ENCODE measurements at regions of chr5 and their contacts with region 1.

Region 1: GRCh38 chr5:129616517-129616916 is 131.4 kb upstream of the MINAR2 start:
- DNase-seq: no peak
- H3K4me3 Mint-ChIP-seq: no peak overlapping the region
- H3K27ac Mint-ChIP-seq: no peak overlapping the region
- H3K4me1 Mint-ChIP-seq: no peaks in the 10 kb centered on the region
- H3K27me3 Mint-ChIP-seq: no peaks in the 10 kb centered on the region

Region 2: DNA sequence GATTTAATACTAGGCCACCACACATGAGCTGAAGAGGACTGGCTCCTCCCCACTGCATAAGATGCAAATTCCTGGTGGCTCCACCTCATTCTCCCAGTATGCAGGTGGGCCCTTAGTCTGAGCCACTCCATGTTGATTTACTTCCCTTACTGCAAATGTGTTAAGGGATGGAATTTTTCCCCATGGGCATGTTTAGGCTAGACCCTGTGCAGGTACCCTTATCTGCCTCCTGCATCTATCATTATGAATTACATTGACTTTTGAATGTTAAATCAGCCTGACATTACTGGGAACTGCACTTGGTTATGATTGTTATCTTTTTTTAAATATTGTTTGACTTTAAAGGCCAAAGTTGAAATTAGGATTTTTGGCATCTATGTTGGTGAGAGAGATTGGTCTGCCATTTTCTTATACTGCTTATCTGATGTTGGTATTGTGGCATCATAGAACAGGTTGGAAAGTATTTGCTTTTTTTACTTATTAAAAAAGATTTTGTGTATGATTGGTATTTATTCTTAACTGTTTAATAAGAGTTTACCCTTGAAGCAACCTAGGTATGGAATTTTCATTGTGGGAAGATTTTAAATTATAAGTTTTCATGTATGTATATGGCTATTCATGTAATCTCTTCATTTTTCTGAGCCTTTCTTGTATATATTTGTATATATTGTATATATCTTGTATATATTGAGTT is 438.8 kb before region 1 on chr5:
- intact Hi-C with region 1: no loop called
- DNase-seq: no peak
- H3K4me3 Mint-ChIP-seq: no peak overlapping the region
- H3K27ac Mint-ChIP-seq: no peak overlapping the region
- H3K4me1 Mint-ChIP-seq: no peaks in the 10 kb centered on the region
- H3K27me3 Mint-ChIP-seq: no peaks in the 10 kb centered on the region

Region 3: GRCh38 chr5:130189961-130190360 is 573.4 kb after region 1 on chr5:
- intact Hi-C with region 1: loop called (anchors 5 kb)
- DNase-seq: no peak
- H3K4me3 Mint-ChIP-seq: no peak overlapping the region
- H3K27ac Mint-ChIP-seq: no peak overlapping the region
- H3K4me1 Mint-ChIP-seq: no peaks in the 10 kb centered on the region
- H3K27me3 Mint-ChIP-seq: peaks cover 2% of the 10 kb centered on the region

Measured in activated T-helper 1 cell treated with anti-CD3 and anti-CD28 coated beads, Interleukin-12 subunit alpha, Interleukin-12 subunit beta, Interleukin-2, Interleukin-4 antibody, amounts not matched to agents 30 ng/mL and 10 ng/mL and 1 ng/mL, durations not matched to agents 14 hours and 24 hours and 36 hours (primary cell).